K562 (cell line): ENCODE measurements at regions of chr4 and their contacts with region 1.

Region 1: DNA sequence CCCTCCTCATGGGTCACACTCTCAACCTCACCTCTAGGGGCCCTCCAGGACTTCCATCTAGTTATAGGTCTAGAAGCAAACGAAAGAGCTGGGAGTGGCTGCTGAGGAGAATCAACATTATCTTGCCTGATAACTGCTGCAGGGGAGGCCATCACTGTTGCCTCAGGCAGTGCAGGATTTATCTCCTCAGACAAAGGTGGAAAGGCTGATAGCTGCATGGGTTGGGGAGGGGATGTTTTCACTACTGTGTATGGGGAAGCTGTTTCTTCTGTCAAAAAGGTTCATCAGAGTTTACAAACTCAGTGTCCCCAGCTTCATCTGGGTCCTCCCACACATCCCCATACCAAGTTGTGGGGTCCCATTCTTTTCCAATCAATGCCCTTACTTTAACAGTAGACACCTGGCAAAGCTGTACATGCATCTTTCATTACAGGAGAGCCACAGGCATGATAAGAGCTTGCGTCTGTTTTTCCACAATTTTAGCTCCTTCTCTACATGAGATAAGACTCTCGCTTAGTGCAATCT is 17.6 kb upstream of the PRDM8 start:
- DNase-seq: peak; percentile 27 to 90 (median 59)
- ATAC-seq: peak; percentile 99
- H3K4me3 ChIP-seq: no peak overlapping the region
- H3K27ac ChIP-seq: peak overlapping the region; percentile 43; the same call in 2 of the 3 replicates
- H3K4me1 ChIP-seq: peaks cover 0 to 16% of the 10 kb centered on the region in 2 experiments
- H3K27me3 ChIP-seq: no peaks in the 10 kb centered on the region
- CTCF ChIP-seq: peak; percentile 41 to 51 (median 48); a peak in 5 of 6 replicates
- EP300 ChIP-seq: peak; percentile 92
- POLR2A ChIP-seq: no peak
- RAD21 ChIP-seq: peak; percentile 40 to 47

Region 2: DNA sequence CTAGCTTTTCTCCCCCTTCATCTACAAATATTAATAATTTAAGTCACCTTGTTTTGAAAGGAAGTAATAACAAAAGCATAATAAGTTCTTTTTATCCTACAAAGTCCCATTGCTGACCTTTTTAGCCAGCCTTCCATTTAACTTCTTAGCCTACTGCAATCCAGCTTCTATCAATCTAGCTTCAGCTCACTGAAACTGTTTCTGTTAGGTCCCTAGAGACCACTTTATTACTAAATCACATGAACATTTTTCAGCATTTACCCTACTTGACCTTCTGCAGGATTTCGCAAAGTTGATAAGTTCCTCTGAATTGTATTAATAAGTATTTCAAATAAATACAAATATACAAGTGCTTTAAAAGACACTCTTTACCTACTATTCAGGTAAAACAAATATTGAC is 293.1 kb before region 1 on chr4:
- CTCF ChIA-PET with region 1: no interaction called
- POLR2A ChIA-PET with region 1: no interaction called
- in situ Hi-C with region 1: no loop called
- intact Hi-C with region 1: no loop called
- DNase-seq: no peak
- ATAC-seq: no peak
- H3K4me3 ChIP-seq: no peak overlapping the region
- H3K27ac ChIP-seq: no peak overlapping the region
- H3K4me1 ChIP-seq: no peaks in the 10 kb centered on the region
- H3K27me3 ChIP-seq: no peaks in the 10 kb centered on the region
- CTCF ChIP-seq: no peak
- EP300 ChIP-seq: no peak
- POLR2A ChIP-seq: no peak
- RAD21 ChIP-seq: no peak

Region 3: DNA sequence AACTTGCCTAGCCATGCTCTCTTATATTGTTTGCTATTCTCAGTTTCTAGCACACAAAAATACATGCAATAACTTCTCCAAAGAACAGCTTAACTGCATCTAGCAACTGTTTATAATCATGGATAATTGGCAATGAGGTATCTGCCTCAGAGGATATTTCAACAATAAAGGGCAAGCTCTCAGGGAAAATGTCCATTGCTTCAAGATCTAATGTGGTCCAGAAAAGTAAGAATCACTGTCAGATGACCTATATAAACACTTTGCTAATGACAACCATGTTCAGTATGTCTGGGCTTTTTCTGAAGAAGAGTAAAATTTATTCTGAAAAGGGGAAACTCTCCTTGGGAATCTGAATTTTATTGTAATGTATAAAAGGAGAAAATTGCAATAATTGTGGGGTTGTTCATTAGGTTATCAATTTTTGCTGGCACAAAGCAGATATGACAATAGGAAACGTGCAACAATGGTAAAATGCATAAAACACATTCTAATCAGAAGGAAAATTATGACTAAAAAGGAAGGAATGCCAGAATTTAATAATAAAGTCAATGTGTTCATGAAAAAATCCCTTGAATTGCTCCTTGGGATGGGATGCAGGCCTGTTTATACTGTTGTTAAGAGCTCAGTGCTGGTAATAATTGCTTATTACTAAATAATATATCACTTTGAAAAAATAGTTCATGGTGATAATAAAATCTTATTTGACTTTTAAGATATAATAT is 196.9 kb before region 1 on chr4:
- CTCF ChIA-PET with region 1: no interaction called
- POLR2A ChIA-PET with region 1: no interaction called
- in situ Hi-C with region 1: no loop called
- intact Hi-C with region 1: no loop called
- DNase-seq: no peak
- ATAC-seq: no peak
- H3K4me3 ChIP-seq: no peak overlapping the region
- H3K27ac ChIP-seq: no peak overlapping the region
- H3K4me1 ChIP-seq: no peaks in the 10 kb centered on the region
- H3K27me3 ChIP-seq: no peaks in the 10 kb centered on the region
- CTCF ChIP-seq: no peak
- EP300 ChIP-seq: no peak
- POLR2A ChIP-seq: no peak
- RAD21 ChIP-seq: no peak

Region 4: GRCh38 chr4:80125252-80126177 is 54.2 kb before region 1 on chr4:
- CTCF ChIA-PET with region 1: no interaction called
- POLR2A ChIA-PET with region 1: no interaction called
- in situ Hi-C with region 1: no loop called
- intact Hi-C with region 1: loop called (anchors 5 kb)
- DNase-seq: peak; percentile 28 to 76 (median 44)
- ATAC-seq: peak; percentile 74
- H3K4me3 ChIP-seq: peak overlapping the region; percentile 36
- H3K27ac ChIP-seq: peak overlapping the region; percentile 90
- H3K4me1 ChIP-seq: peaks cover 0 to 37% of the 10 kb centered on the region in 2 experiments; a peak in 4 of 5 replicates
- H3K27me3 ChIP-seq: no peaks in the 10 kb centered on the region
- CTCF ChIP-seq: peak; percentile 37 to 59 (median 50); a peak in 5 of 6 replicates
- EP300 ChIP-seq: peak; percentile 85; the same call in 1 of the 2 replicates
- POLR2A ChIP-seq: no peak
- RAD21 ChIP-seq: peak; percentile 52 to 57; a peak in 3 of 4 replicates

Region 5: GRCh38 chr4:80142394-80143306 is 37.0 kb before region 1 on chr4:
- CTCF ChIA-PET with region 1: no interaction called
- POLR2A ChIA-PET with region 1: no interaction called
- in situ Hi-C with region 1: no loop called
- intact Hi-C with region 1: loop called (anchors 1 kb)
- DNase-seq: peak in 3 of 4 experiments; percentile 38 to 76 (median 47)
- ATAC-seq: peak; percentile 51
- H3K4me3 ChIP-seq: no peak overlapping the region
- H3K27ac ChIP-seq: peak overlapping the region; percentile 75; the same call in 2 of the 3 replicates
- H3K4me1 ChIP-seq: peaks cover 8 to 66% of the 10 kb centered on the region in 2 experiments
- H3K27me3 ChIP-seq: no peaks in the 10 kb centered on the region
- CTCF ChIP-seq: no peak
- EP300 ChIP-seq: no peak; the same call in 1 of the 2 replicates
- POLR2A ChIP-seq: no peak
- RAD21 ChIP-seq: no peak

Region 6: GRCh38 chr4:80335554-80336358 is 156.1 kb after region 1 on chr4 and contains the start of gene CFAP299:
- CTCF ChIA-PET with region 1: no interaction called
- POLR2A ChIA-PET with region 1: no interaction called
- in situ Hi-C with region 1: no loop called
- intact Hi-C with region 1: no loop called
- DNase-seq: peak; percentile 86 to 96 (median 90)
- ATAC-seq: peak; percentile 97
- H3K4me3 ChIP-seq: peak within 1 kb of the TSS; percentile 51
- H3K27ac ChIP-seq: peak within 1 kb of the TSS; percentile 52
- H3K4me1 ChIP-seq: peaks cover 5 to 9% of the 10 kb centered on the region in 2 experiments; a peak in 3 of 5 replicates
- H3K27me3 ChIP-seq: no peaks in the 10 kb centered on the region
- CTCF ChIP-seq: peak; percentile 67 to 81 (median 78)
- EP300 ChIP-seq: no peak
- POLR2A ChIP-seq: no peak
- RAD21 ChIP-seq: peak; percentile 73 to 77
- polyA plus RNA-seq, gene CFAP299: 0.69 to 0.78 TPM